ENCODE measurements at regions of chr10 and their contacts with region 1.

Region 1: GRCh38 chr10:35412900-35413491 is 76.7 kb downstream of the CCNY start:
- DNase-seq: no peak
- H3K4me3 ChIP-seq: no peak overlapping the region
- H3K4me3 Mint-ChIP-seq: no peak overlapping the region
- H3K27ac Mint-ChIP-seq: no peak overlapping the region
- H3K4me1 ChIP-seq: peaks cover 30% of the 10 kb centered on the region
- H3K4me1 Mint-ChIP-seq: peaks cover 14% of the 10 kb centered on the region
- H3K27me3 ChIP-seq: no peaks in the 10 kb centered on the region
- H3K27me3 Mint-ChIP-seq: no peaks in the 10 kb centered on the region
- CTCF ChIP-seq: no peak

Region 2: GRCh38 chr10:35384265-35384868 is 28.6 kb before region 1 on chr10:
- CTCF ChIA-PET with region 1: interaction called, 3 read pairs
- POLR2A ChIA-PET with region 1: no interaction called
- intact Hi-C with region 1: loop called (anchors 2 kb)
- DNase-seq: peak; percentile 74 to 80
- H3K4me3 ChIP-seq: no peak overlapping the region
- H3K4me3 Mint-ChIP-seq: peak overlapping the region; percentile 48
- H3K27ac Mint-ChIP-seq: peak overlapping the region; percentile 85
- H3K4me1 ChIP-seq: peaks cover 44% of the 10 kb centered on the region
- H3K4me1 Mint-ChIP-seq: peaks cover 53% of the 10 kb centered on the region
- H3K27me3 ChIP-seq: no peaks in the 10 kb centered on the region
- H3K27me3 Mint-ChIP-seq: no peaks in the 10 kb centered on the region
- CTCF ChIP-seq: no peak

Region 3: DNA sequence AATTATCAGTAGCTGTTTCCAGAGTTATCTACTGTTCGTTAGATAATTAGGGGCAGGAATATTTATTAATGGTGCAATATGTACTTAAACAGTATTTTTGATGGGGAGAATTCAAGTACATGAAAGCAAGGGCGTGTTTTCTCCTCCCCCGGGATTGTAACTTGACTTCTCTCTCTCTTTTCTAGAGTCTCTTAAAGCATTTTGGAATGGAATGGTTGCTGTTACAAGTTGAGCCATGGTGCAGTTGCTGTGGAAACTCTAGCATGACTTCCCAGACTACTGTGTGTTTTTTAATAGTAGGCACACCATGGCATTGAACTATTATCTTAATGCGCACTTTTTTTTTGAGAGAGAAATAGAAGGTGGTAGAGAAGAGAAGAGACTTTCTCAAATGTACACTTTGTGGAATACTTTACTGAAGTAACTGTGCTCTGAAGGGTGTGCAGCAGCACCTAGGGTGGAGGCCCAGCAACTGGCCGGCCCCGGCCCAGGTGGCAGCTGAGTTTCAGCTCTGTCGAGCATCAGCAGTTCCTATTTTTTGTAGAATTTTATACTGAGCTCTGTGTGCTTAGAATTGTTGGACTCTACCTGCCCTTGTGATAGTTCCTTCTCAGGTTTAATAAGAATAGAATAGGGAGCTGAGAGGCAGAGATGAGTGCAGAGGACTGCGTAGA is 12.3 kb before region 1 on chr10:
- CTCF ChIA-PET with region 1: no interaction called
- POLR2A ChIA-PET with region 1: interaction called, 13 read pairs
- intact Hi-C with region 1: no loop called
- DNase-seq: no peak
- H3K4me3 ChIP-seq: no peak overlapping the region
- H3K4me3 Mint-ChIP-seq: no peak overlapping the region
- H3K27ac Mint-ChIP-seq: no peak overlapping the region
- H3K4me1 ChIP-seq: peaks cover 19% of the 10 kb centered on the region
- H3K4me1 Mint-ChIP-seq: no peaks in the 10 kb centered on the region
- H3K27me3 ChIP-seq: no peaks in the 10 kb centered on the region
- H3K27me3 Mint-ChIP-seq: no peaks in the 10 kb centered on the region
- CTCF ChIP-seq: no peak

Measured in Caco-2 (cell line).